ENCODE measurements at regions of chr9 and their contacts with region 1.

Region 1: GRCh38 chr9:15606643-15607472 is 54.0 kb downstream of the CCDC171 start:
- DNase-seq: peak; percentile 35
- ATAC-seq: peak; percentile 64; the same call in 1 of the 2 replicates
- H3K4me3 ChIP-seq: no peak overlapping the region
- H3K27ac ChIP-seq: no peak overlapping the region
- H3K4me1 ChIP-seq: no peaks in the 10 kb centered on the region
- H3K27me3 ChIP-seq: no peaks in the 10 kb centered on the region
- CTCF ChIP-seq: peak; percentile 68
- POLR2A ChIP-seq: no peak
- RAD21 ChIP-seq: peak; percentile 58

Region 2: DNA sequence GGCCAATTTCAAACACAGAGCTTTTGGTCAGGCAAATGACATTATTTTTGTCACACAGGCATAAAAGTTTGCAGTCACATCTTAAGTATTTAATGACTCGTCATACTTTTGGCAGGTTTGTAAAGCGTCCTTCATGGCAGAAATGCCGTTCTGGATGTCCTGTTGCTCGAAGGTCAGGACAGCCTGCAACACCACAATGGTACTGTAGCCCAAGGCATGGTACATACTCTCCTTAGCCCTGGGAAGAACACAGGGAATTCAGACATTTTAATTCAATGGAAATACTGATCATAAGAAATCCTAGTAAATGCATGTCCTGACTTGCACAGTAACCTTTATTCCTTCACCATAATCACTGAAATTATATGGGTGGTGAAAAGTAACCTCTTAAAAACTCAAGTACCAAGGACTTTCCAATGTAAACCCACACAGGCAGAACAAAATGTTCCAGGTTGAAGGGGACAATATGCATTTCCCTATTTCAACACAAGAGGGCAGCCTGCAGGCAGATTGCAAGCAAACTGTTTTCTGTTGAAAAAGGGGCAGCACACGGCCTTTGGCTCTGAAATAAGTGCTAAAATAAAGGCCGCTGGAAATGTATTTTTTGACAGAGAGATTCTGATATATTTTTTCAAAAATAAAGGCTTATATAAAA is 395.6 kb before region 1 on chr9:
- CTCF ChIA-PET with region 1: interaction called, 5 read pairs
- POLR2A ChIA-PET with region 1: no interaction called
- dilution Hi-C with region 1: no loop called
- in situ Hi-C with region 1: loop called (anchors 25 kb)
- intact Hi-C with region 1: loop called (anchors 5 kb)
- DNase-seq: peak; percentile 79
- ATAC-seq: peak; percentile 78
- H3K4me3 ChIP-seq: no peak overlapping the region
- H3K27ac ChIP-seq: no peak overlapping the region; the same call in 1 of the 2 replicates
- H3K4me1 ChIP-seq: peaks cover 2% of the 10 kb centered on the region
- H3K27me3 ChIP-seq: no peaks in the 10 kb centered on the region
- CTCF ChIP-seq: peak; percentile 87
- POLR2A ChIP-seq: no peak; the same call in 1 of the 2 replicates
- RAD21 ChIP-seq: peak; percentile 88

Region 3: GRCh38 chr9:15422372-15423230 is 184.3 kb before region 1 on chr9 and contains the start of gene SNAPC3:
- CTCF ChIA-PET with region 1: interaction called, 4 read pairs
- POLR2A ChIA-PET with region 1: interaction called, 5 read pairs
- dilution Hi-C with region 1: no loop called
- in situ Hi-C with region 1: no loop called
- intact Hi-C with region 1: loop called (anchors 2 kb)
- DNase-seq: peak; percentile 93
- ATAC-seq: peak; percentile 98
- H3K4me3 ChIP-seq: peak within 1 kb of the TSS; percentile 80
- H3K27ac ChIP-seq: peak within 1 kb of the TSS; percentile 93
- H3K4me1 ChIP-seq: peaks cover 3% of the 10 kb centered on the region
- H3K27me3 ChIP-seq: no peaks in the 10 kb centered on the region
- CTCF ChIP-seq: 0 out of 2 replicates have a peak, but pooled peaks have one; percentile 1
- POLR2A ChIP-seq: no peak; the same call in 1 of the 2 replicates
- RAD21 ChIP-seq: no peak
- total RNA-seq, gene SNAPC3: 31.0 and 40.0 TPM in 2 replicates

Region 4: GRCh38 chr9:15499139-15499538 is 107.7 kb before region 1 on chr9:
- CTCF ChIA-PET with region 1: no interaction called
- POLR2A ChIA-PET with region 1: no interaction called
- dilution Hi-C with region 1: no loop called
- in situ Hi-C with region 1: no loop called
- intact Hi-C with region 1: loop called (anchors 5 kb)
- DNase-seq: no peak
- ATAC-seq: peak; percentile 53
- H3K4me3 ChIP-seq: no peak overlapping the region
- H3K27ac ChIP-seq: no peak overlapping the region
- H3K4me1 ChIP-seq: 0 out of 2 replicates have a peak, but pooled peaks cover 1% of the 10 kb centered on the region
- H3K27me3 ChIP-seq: no peaks in the 10 kb centered on the region
- CTCF ChIP-seq: no peak
- POLR2A ChIP-seq: no peak
- RAD21 ChIP-seq: no peak

Region 5: DNA sequence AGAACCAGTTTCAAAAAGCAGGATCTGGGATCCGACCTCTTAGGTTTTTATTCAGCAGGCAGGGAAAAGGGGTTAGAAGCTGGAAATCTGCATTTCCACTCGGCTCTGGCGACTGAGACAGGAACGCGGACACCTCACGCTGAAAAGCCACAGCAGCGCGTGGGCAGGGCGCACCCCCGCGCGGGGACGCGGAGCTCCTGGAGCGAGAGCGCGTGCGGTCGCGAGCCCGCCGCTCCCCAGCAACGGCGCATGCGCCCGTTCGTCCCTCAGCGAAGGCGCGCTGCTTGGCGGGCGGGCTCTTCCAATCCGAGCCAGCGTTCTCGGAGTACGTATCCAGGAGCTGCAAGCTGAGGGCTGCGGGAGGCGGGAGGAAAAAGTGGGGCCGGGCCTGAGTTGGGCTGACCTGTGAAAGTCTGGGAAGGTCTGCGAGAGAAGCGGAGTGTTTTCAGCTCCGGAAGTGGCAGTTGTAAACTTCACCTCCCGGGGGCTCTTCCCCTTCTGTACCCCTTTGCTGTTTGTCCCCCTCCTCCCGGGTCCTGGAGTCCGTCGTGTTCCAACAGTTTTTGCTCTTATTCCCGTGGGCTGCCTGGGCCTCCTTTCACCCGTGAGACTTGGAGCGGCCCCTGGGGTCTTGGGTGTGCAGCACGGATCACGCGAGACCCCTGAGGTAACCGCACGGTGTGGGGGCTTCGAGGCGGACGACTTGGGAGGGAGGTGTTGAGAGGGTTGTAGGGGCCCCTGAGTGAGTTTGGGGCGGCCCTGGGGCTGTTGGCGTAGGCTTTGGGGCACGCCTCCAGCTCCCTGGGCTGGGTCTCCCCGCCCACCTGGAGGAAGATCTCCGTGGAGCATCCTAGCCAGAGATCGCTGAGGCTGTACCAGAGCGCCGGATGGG is 54.0 kb before region 1 on chr9 and contains the start of gene CCDC171:
- CTCF ChIA-PET with region 1: no interaction called
- POLR2A ChIA-PET with region 1: no interaction called
- dilution Hi-C with region 1: no loop called
- in situ Hi-C with region 1: no loop called
- intact Hi-C with region 1: loop called (anchors 1 kb)
- DNase-seq: peak; percentile 95
- ATAC-seq: peak; percentile 99
- H3K4me3 ChIP-seq: peak within 1 kb of the TSS; percentile 62
- H3K27ac ChIP-seq: peak within 1 kb of the TSS; percentile 85
- H3K4me1 ChIP-seq: no peaks in the 10 kb centered on the region
- H3K27me3 ChIP-seq: no peaks in the 10 kb centered on the region
- CTCF ChIP-seq: no peak
- POLR2A ChIP-seq: peak; percentile 35; the same call in 1 of the 2 replicates
- RAD21 ChIP-seq: no peak
- total RNA-seq, gene CCDC171: 2.2 and 2.5 TPM in 2 replicates

Measured in IMR-90 (cell line).